ENCODE measurements at regions of chr1 and their contacts with region 1.

Region 1: DNA sequence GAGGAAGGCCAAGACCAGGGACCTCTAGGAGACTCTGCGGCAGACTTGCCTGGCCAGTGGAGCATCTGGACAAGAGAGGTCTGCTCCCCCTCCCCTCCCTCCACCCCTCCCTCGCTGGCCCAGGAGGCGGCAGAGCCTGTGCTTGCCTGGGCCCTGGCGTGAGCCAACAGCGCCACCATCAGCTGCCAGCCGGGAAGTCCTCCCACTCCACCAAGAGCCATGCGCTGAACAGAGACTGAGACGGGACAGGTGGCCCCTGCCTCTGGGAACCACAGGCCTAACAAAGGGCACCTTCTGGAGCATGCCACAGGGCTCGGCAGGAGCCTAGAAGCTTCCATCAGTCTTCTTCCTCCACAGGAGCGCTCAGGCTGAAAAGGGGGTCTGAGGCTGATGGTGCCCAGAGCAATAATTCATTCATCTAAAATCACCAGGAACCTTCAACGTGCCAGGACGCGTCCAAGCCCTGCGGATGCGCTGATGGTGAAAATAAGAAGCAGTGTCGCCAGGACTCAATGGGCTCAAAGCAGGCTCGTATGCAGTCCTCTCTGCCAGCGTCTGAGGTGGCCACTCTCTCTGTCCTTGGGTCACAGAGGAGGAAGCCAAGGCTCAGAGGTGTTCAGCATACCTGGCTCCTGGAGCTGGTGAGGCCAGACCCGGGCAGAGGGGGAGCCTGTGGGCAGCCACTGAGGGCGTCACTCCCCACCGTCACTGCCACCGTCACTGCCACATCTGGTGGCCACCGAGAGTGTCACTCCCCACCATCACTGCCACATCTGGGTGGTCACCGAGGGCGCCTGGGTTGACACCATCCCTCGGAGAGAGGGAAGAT is 161.2 kb downstream of the NPHP4 start:
- DNase-seq: peak; percentile 93
- ATAC-seq: peak; percentile 91
- H3K4me3 Mint-ChIP-seq: no peak overlapping the region
- H3K27ac Mint-ChIP-seq: no peak overlapping the region
- H3K4me1 Mint-ChIP-seq: peaks cover 33% of the 10 kb centered on the region
- H3K27me3 Mint-ChIP-seq: peaks cover 7% of the 10 kb centered on the region
- CTCF ChIP-seq: peak; percentile 36; the same call in 1 of the 2 replicates

Region 2: DNA sequence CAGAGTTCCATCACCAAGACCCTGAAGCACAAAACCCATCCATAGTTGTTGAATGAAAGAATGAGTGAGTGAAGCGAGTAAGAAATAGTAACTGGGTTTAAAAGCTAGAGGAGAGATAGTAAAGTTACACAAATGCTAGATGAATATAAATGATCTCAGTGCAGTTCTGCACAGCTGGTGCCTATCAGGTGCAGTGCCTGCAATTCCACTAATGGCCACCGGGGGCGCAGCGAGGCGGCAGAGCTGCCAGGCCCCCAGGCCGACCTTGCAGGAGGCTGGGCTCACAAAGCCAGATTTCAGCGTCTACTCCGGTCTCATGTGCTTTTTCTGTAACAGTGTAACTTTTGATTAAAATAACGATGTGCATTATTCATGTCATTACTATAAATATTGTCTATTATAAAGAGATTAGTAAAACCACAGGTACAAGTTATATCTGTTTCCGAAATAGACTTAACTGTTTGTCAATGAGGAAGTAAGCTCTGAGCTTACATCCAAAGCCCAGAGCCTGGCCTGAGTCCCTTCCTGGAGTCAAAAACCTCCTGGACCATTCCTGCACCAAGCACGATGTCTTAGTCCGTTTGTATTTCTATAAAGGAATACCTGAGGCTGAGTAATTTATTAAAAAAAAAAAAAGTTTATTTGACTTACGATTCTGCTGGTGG is 316.3 kb before region 1 on chr1:
- CTCF ChIA-PET with region 1: interaction called, 17 read pairs
- POLR2A ChIA-PET with region 1: no interaction called
- DNase-seq: peak; percentile 78
- ATAC-seq: peak; percentile 71
- H3K4me3 Mint-ChIP-seq: no peak overlapping the region
- H3K27ac Mint-ChIP-seq: no peak overlapping the region
- H3K4me1 Mint-ChIP-seq: no peaks in the 10 kb centered on the region
- H3K27me3 Mint-ChIP-seq: peaks cover 7% of the 10 kb centered on the region; the same call in 1 of the 2 replicates
- CTCF ChIP-seq: peak; percentile 99

Region 3: GRCh38 chr1:5751833-5752745 is 78.9 kb before region 1 on chr1:
- CTCF ChIA-PET with region 1: interaction called, 10 read pairs
- POLR2A ChIA-PET with region 1: no interaction called
- DNase-seq: no peak
- ATAC-seq: peak; percentile 29
- H3K4me3 Mint-ChIP-seq: no peak overlapping the region
- H3K27ac Mint-ChIP-seq: no peak overlapping the region; the same call in 1 of the 2 replicates
- H3K4me1 Mint-ChIP-seq: peaks cover 41% of the 10 kb centered on the region
- H3K27me3 Mint-ChIP-seq: no peaks in the 10 kb centered on the region; the same call in 1 of the 2 replicates
- CTCF ChIP-seq: no peak

Region 4: DNA sequence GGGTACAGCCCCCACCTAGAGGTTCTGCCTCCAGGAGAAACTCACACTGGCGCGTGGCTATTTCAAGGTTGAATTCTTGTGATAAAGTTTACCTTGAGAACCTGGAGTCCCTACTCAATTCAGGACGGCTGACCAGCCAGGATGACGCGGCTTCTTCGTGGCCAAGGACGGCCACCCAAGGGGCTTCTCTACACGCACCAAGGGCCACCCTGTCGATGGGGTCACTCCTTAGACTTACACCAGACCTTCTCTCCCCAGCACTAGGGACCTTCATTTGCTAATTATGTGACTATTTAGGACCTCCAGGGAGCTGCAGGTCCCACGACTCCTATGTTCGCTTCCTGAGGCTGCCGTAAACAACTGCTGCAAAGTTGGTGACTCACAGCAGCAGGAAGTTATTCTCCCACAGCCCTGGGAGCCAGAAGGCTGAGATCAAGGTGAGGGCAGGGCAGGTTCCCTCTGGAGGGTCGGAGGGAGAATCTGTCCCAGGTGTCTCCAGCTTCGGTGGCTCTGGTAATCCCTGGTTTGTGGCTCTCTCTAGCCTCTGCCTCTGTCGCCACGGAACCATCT is 25.3 kb after region 1 on chr1:
- CTCF ChIA-PET with region 1: interaction called, 10 read pairs
- POLR2A ChIA-PET with region 1: no interaction called
- DNase-seq: no peak
- ATAC-seq: no peak
- H3K4me3 Mint-ChIP-seq: no peak overlapping the region
- H3K27ac Mint-ChIP-seq: peak overlapping the region; percentile 84; the same call in 1 of the 2 replicates
- H3K4me1 Mint-ChIP-seq: no peaks in the 10 kb centered on the region
- H3K27me3 Mint-ChIP-seq: no peaks in the 10 kb centered on the region
- CTCF ChIP-seq: no peak

Region 5: DNA sequence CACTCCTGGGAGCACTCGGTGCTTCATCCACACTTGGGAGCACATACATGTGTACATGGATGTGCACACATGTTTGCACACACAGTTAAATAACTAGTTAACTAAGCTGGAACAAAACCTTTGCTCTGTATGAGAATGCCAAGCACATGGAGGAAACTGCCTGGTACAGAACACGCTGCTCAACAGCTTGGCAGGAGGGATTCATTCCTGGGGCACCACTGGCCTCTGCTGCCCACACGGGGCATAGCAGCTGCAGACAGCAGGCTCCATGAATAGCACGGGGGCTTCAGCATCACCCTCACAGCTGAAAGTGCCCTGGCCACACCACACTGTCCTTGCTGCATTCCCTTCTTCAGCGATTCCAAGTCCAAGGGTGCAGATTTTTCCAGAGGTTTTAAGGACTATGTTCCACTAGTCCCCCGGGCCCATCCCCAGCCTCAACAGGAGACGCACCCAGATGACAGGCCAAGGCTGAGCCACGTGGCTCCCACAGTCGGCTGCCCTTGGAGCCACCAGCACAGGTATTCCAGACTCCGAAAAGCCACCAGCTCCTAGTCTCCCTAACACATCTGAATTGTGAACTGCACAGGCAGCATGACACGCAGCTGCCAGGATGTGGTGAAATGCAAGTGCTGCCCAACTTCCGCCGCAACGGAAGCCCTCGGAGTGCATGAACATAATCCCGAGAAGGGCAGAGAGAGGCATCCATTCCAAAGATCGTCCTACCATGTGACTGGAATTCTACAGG is 144.3 kb after region 1 on chr1:
- CTCF ChIA-PET with region 1: interaction called, 11 read pairs
- POLR2A ChIA-PET with region 1: no interaction called
- DNase-seq: peak; percentile 63
- ATAC-seq: peak; percentile 87
- H3K4me3 Mint-ChIP-seq: no peak overlapping the region
- H3K27ac Mint-ChIP-seq: no peak overlapping the region
- H3K4me1 Mint-ChIP-seq: peaks cover 12% of the 10 kb centered on the region
- H3K27me3 Mint-ChIP-seq: no peaks in the 10 kb centered on the region
- CTCF ChIP-seq: peak; percentile 50; the same call in 1 of the 2 replicates